HEK293 (cell line): ENCODE measurements at regions of chrX and their contacts with region 1.

Region 1: DNA sequence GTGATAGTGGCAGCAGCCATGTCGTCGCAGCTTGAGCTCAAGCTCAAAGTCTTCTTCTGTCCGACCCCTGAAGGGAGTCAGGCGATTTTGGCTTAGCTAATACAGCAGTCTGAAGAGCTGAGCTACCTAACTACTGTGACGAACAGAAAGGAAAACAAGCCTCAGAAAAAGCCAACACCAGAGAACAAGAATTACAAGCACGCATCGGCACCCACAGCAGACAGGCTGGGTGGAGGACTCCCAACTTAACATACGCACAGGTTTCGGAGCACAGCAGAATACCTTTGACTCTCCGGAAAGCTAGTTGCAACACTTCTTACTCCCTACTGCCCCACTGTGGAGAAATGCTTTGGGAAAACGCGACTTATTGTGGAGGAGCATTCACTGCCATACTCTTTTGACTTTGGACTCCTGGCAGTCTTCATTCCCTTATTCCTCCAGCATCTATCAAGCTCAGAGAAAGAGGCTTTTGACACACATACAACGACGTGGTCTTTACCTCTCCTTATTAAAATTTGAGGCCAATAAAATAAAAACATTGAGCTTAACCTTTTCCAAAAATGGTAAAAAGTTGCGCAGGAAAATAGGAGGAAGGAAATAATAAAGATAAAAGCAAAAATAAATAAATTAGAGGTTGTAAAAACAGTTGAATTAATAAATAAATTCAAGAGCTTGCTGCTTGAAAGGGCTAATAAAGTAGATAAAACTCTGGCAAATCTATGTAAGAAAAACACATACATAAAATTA is 41.3 kb upstream of the GPC3 start:
- H3K4me3 ChIP-seq: no peak overlapping the region
- H3K27ac ChIP-seq: no peak overlapping the region
- H3K4me1 ChIP-seq: no peaks in the 10 kb centered on the region
- CTCF ChIP-seq: peak; percentile 63

Region 2: GRCh38 chrX:133921764-133922389 is 104.9 kb before region 1 on chrX:
- CTCF ChIA-PET with region 1: interaction called, 33 read pairs
- POLR2A ChIA-PET with region 1: no interaction called
- H3K4me3 ChIP-seq: no peak overlapping the region
- H3K27ac ChIP-seq: no peak overlapping the region; the same call in 1 of the 2 replicates
- H3K4me1 ChIP-seq: no peaks in the 10 kb centered on the region; the same call in none of the 2 replicates
- CTCF ChIP-seq: peak; percentile 87

Region 3: GRCh38 chrX:134013092-134013497 is 13.6 kb before region 1 on chrX:
- CTCF ChIA-PET with region 1: interaction called, 12 read pairs
- POLR2A ChIA-PET with region 1: no interaction called
- H3K4me3 ChIP-seq: no peak overlapping the region
- H3K27ac ChIP-seq: peak overlapping the region; percentile 18; the same call in 1 of the 2 replicates
- H3K4me1 ChIP-seq: no peaks in the 10 kb centered on the region; the same call in none of the 2 replicates
- CTCF ChIP-seq: no peak

Region 4: GRCh38 chrX:134144231-134144630 is 117.5 kb after region 1 on chrX:
- CTCF ChIA-PET with region 1: interaction called, 19 read pairs
- POLR2A ChIA-PET with region 1: no interaction called
- H3K4me3 ChIP-seq: no peak overlapping the region
- H3K27ac ChIP-seq: no peak overlapping the region
- H3K4me1 ChIP-seq: no peaks in the 10 kb centered on the region
- CTCF ChIP-seq: no peak